ENCODE measurements at regions of chr3 and their contacts with region 1.

Region 1: DNA sequence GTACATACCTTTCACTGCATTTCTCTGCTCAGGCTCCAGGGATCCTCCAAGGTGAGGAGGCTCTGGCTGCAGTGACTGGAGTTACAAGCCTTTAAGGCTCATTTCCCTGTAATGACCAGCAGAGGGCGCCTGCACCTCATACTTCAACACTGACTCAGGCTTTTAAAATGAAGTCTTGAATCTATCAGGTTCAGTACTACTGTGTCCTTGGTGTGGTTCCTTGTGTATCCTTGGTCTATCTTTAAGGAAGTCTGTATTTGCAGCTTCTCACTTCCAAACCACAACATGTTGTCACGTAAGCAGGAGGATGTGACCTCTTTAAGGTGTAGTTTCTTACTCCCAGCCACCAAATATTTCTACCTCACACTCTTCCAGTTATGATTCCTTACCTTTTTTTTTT is 122.5 kb upstream of the ZBED2 start:
- DNase-seq: peak; percentile 83
- H3K4me3 ChIP-seq: no peak overlapping the region
- H3K27ac ChIP-seq: peak overlapping the region; percentile 18
- H3K4me1 ChIP-seq: peaks cover 6% of the 10 kb centered on the region
- H3K27me3 ChIP-seq: no peaks in the 10 kb centered on the region
- CTCF ChIP-seq: peak; percentile 81 to 82
- POLR2A ChIP-seq: no peak

Region 2: DNA sequence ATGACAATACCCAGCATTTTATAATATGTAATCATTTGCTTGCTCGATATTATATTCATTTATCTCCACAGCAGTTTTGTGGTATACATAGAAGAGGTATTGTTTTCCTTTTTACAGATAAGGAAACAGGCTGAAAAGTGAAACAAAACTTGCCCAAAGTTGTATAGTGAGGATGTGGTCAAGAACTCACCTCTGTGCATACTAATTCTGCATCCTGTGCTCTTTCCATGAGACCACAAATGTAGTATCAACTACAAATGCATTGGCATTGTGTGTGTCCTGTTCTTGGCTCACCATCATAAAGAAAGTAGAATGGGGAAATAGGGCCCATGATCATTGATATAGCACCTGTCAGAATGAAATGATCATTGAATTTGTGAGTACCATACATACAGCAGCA is 478.7 kb before region 1 on chr3:
- CTCF ChIA-PET with region 1: no interaction called
- POLR2A ChIA-PET with region 1: no interaction called
- dilution Hi-C with region 1: no loop called
- intact Hi-C with region 1: no loop called
- DNase-seq: no peak
- H3K4me3 ChIP-seq: no peak overlapping the region
- H3K27ac ChIP-seq: no peak overlapping the region
- H3K4me1 ChIP-seq: no peaks in the 10 kb centered on the region
- H3K27me3 ChIP-seq: no peaks in the 10 kb centered on the region
- CTCF ChIP-seq: no peak
- POLR2A ChIP-seq: no peak

Region 3: DNA sequence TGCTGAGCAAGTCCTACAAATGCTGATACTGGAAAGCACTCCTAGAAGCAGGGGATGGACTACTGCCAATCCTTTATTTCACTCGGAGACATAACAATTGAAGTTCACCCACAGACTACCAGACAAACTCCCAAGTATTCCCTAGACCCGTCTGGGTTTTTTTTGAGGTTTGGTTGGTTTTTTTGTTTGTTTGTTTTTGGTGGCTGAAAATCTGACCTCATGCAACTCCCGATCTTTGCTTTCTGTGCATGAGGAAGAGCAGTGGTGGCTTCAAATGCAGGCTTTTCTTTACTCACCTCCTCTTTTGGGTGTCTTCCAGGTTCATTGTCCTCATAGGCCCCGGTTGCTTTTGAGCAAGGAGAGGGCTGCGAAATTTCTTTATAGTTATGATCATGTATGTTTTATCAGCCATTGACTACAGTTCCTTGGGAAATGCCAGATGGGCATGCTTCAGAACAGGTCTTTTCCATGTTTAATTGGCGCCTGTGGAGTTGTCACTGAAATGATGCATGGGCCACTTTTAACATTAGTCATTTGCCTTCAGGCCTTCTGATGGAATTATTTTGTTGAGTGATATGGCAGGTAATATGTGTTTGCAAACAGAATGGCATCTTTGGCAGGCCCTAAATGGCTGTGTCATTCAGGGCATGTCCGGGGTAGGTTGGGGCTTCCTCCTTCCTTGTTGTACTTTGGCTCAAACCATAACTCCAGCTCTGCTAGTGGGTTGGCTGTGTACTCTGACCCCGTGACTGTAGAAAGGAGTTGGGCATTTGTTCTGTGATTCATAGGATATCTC is 41.2 kb before region 1 on chr3:
- CTCF ChIA-PET with region 1: interaction called, 13 read pairs
- POLR2A ChIA-PET with region 1: no interaction called
- dilution Hi-C with region 1: no loop called
- intact Hi-C with region 1: no loop called
- DNase-seq: peak; percentile 80
- H3K4me3 ChIP-seq: peak overlapping the region in 2 of 3 experiments; percentile 18 to 80
- H3K27ac ChIP-seq: peak overlapping the region; percentile 57
- H3K4me1 ChIP-seq: peaks cover 30% of the 10 kb centered on the region
- H3K27me3 ChIP-seq: no peaks in the 10 kb centered on the region
- CTCF ChIP-seq: no peak
- POLR2A ChIP-seq: no peak

Region 4: DNA sequence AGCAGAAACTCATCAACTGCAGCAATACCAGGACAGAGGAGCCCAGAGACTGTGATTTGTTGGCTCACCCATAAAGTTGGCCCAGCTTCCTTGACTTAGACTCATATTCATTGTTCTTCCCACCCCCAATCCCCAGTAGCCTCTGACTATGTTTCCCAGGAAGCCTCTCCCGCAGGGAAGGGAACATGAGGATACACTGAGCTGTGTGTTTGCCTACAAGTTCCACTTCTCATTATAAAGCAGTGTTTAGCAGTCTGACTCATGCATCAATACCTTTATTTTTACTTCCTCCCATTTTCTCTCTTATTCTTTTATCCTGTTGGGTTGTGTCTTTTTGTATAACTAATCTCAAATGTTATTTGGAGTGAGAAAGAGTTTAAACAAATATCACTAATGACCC is 29.9 kb after region 1 on chr3:
- CTCF ChIA-PET with region 1: interaction called, 9 read pairs
- POLR2A ChIA-PET with region 1: no interaction called
- dilution Hi-C with region 1: no loop called
- intact Hi-C with region 1: loop called (anchors 1 kb)
- DNase-seq: peak; percentile 40
- H3K4me3 ChIP-seq: no peak overlapping the region
- H3K27ac ChIP-seq: peak overlapping the region; percentile 70
- H3K4me1 ChIP-seq: peaks cover 14% of the 10 kb centered on the region
- H3K27me3 ChIP-seq: no peaks in the 10 kb centered on the region
- CTCF ChIP-seq: no peak
- POLR2A ChIP-seq: no peak

Region 5: GRCh38 chr3:111874177-111874820 is 156.7 kb after region 1 on chr3:
- CTCF ChIA-PET with region 1: interaction called, 14 read pairs
- POLR2A ChIA-PET with region 1: no interaction called
- dilution Hi-C with region 1: no loop called
- intact Hi-C with region 1: no loop called
- DNase-seq: peak; percentile 47
- H3K4me3 ChIP-seq: no peak overlapping the region
- H3K27ac ChIP-seq: peak overlapping the region; percentile 27
- H3K4me1 ChIP-seq: peaks cover 15% of the 10 kb centered on the region
- H3K27me3 ChIP-seq: no peaks in the 10 kb centered on the region
- CTCF ChIP-seq: no peak
- POLR2A ChIP-seq: no peak

Region 6: DNA sequence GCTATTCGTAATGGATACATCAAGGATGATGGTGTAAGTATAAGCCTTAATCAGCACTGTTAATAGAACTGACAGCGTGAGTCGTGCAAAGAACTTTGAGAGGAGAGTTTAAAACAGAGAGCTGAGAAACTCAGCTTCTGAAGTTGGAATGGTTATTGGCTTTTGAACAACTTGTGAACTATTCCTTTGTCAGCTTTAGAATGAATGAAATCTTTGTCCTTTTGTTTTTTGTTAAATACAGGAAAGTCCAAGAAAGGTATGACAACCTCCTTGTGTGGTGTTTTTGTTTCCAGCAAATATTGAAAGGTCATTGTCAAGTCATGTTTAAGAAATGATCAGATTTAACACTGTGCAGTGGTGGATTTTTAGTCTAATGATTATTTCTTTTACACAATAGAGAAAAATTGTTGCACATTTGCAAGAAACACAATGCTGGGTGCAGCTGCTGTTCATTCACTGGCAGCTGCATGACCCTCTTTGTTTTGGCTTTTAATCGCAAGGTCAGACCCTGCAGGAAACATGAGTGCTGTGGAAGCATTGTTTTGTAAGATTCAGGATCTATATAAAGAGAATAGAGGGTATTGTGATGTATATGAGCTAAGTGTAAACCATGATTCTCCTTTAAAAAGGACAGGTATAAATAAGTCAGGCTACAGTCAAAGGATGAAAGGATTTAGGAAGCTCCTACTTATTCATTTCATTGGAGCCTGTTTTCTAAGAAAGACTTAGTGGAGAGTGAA is 239.6 kb after region 1 on chr3:
- CTCF ChIA-PET with region 1: interaction called, 26 read pairs
- POLR2A ChIA-PET with region 1: no interaction called
- dilution Hi-C with region 1: no loop called
- intact Hi-C with region 1: no loop called
- DNase-seq: peak; percentile 91
- H3K4me3 ChIP-seq: no peak overlapping the region
- H3K27ac ChIP-seq: peak overlapping the region; percentile 57
- H3K4me1 ChIP-seq: peaks cover 28% of the 10 kb centered on the region
- H3K27me3 ChIP-seq: no peaks in the 10 kb centered on the region
- CTCF ChIP-seq: no peak
- POLR2A ChIP-seq: no peak

Region 7: DNA sequence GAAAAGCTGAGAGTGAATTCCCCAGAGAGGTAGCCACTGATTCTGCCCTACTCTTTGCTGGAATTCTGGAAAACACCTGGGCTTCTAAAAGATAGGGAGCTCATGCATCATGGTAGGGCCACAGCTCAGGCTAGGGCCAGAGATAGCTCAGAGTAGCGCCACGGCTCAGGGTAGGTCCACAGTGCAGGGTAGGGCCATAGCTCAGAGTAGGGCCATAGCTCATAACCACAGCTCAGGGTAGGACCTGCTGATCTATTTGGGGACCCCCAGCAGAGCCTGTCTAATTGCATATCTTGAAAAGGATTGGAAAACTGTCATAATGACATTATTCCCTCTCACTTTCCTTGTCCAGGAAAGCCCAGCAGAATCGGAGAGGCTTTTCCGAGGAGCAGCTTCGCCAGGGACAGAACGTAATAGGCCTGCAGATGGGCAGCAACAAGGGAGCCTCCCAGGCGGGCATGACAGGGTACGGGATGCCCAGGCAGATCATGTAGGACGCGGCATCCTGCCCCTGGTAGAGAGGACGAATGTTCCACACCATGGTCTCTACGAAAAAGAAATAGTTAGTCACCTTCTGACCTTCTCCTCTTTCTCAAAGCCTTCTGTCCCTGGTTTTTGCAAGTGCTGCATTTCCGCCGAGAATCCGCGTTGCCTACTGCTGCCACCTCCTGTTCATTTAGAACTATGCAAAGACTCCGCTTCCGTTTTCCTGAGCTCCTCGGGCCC is 295.6 kb after region 1 on chr3:
- CTCF ChIA-PET with region 1: interaction called, 139 read pairs
- POLR2A ChIA-PET with region 1: interaction called, 3 read pairs
- dilution Hi-C with region 1: no loop called
- intact Hi-C with region 1: loop called (anchors 1 kb)
- DNase-seq: peak; percentile 70
- H3K4me3 ChIP-seq: no peak overlapping the region
- H3K27ac ChIP-seq: no peak overlapping the region
- H3K4me1 ChIP-seq: no peaks in the 10 kb centered on the region
- H3K27me3 ChIP-seq: no peaks in the 10 kb centered on the region
- CTCF ChIP-seq: peak; percentile 64 to 69
- POLR2A ChIP-seq: no peak

Measured in endothelial cell of umbilical vein (primary cell).